ENCODE measurements at regions of chr10 and their contacts with region 1.

Region 1: DNA sequence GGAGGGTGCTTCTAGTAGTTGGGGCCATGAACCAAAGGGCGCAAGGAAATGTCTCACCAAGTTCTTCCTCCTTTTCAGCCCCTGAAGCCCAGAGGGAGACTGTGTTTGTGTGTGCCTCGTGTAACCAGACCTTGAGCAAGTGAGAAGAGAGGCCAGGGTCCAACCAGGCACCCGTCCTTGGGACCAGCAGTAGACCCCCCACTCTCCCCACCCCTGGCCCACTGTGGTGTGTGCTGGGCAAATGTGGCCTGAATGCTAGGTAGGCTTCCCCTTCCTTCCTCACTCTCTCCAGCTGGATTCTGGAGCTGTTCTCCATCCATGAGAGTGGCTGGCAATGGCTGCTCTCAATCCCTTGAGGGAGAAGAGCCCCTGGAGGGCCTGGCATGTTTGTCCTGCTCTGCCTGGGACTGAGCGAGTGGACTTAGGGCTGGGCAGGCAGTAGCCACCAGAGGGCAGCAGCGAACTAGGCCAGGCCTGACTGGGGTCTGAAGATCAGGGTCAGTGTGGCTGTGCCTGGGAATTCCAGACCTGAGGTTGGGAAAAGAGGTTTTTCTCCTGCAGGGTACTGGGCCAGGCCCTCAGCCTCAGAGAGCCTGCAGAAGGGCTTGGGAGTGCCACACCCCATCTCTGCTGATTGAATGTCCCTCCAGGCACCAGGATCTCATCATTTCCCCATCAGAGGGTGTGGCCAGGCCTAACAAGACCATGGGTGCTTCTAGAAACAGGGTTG is 12.5 kb downstream of the SFRP5 start:
- DNase-seq: peak in 1 of 2 donors; percentile 70
- H3K4me3 ChIP-seq: no peak overlapping the region
- H3K27ac ChIP-seq: no peak overlapping the region
- H3K4me1 ChIP-seq: no peaks in the 10 kb centered on the region
- H3K27me3 ChIP-seq: no peaks in the 10 kb centered on the region
- CTCF ChIP-seq: peak; percentile 52 to 73 (median 64)

Region 2: DNA sequence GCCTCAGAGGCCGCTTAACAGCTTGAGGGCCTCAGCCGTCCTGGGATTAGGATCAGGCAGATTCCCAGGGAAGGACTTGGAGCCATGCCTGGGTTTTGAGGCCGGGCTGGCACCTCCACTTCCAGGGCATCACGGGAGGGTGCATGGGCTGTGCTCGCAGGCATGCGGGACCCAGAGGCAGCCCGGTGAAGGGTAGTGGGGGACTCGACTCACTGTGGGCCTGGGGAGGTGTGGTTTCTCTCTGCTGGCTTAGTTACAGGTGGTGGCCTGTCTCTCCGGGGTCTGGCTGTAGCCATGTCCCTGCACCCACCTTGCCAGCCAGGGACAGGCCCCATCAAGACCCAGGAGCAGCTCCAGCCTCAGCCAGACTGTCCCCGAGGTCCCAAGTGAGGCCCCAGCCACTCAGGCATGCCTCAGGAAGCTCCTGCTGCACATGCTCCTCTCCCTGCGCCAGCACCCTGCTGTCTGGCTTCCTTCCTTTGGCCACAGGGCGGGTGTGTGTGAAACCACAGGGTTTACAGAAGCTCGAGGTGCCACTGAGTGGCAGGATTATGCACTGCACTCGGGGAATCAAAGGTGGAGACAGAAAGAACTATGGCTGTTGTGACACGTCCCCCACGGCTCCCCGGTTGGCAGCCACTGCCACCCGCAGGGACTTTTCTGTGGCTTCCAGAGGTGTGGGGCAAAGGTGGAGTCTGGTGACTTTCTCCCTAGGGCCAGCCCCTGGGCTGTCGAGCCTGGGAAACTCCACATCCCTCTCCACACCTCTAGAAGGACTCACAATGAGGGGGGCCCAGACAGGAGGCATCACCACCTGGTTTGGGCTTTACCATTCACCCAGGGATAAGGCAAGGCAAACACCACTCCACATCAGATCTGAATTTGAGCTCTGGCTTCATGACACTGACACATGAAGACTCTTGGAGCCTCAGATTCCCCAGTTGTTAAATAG is 110.0 kb after region 1 on chr10:
- intact Hi-C with region 1: loop called (anchors 1 kb)
- DNase-seq: peak; percentile 55 to 89
- H3K4me3 ChIP-seq: peak overlapping the region in 1 of 2 donors; percentile 14
- H3K27ac ChIP-seq: no peak overlapping the region
- H3K4me1 ChIP-seq: peaks cover 0 to 7% of the 10 kb centered on the region in 2 donors
- H3K27me3 ChIP-seq: no peaks in the 10 kb centered on the region
- CTCF ChIP-seq: peak; percentile 80 to 93 (median 81)